ENCODE measurements at regions of chr2 and their contacts with region 1.

Region 1: GRCh38 chr2:131154071-131154531 is 49.0 kb downstream of the PLEKHB2 start:
- DNase-seq: peak; percentile 35 to 55 (median 47)
- H3K4me3 ChIP-seq: no peak overlapping the region
- H3K4me3 Mint-ChIP-seq: no peak overlapping the region
- H3K27ac ChIP-seq: no peak overlapping the region
- H3K27ac Mint-ChIP-seq: no peak overlapping the region
- H3K4me1 ChIP-seq: no peaks in the 10 kb centered on the region
- H3K4me1 Mint-ChIP-seq: peaks cover 6% of the 10 kb centered on the region
- H3K27me3 ChIP-seq: no peaks in the 10 kb centered on the region
- H3K27me3 Mint-ChIP-seq: peaks cover 1 to 7% (median 5%) of the 10 kb centered on the region in 3 donors
- CTCF ChIP-seq: peak; percentile 88

Region 2: GRCh38 chr2:131093006-131093695 is 61.0 kb before region 1 on chr2 and contains the start of gene FAM168B:
- intact Hi-C with region 1: no loop called
- DNase-seq: peak; percentile 81 to 90 (median 85)
- H3K4me3 ChIP-seq: peak within 1 kb of the TSS; percentile 56 to 97 (median 80)
- H3K4me3 Mint-ChIP-seq: peak within 1 kb of the TSS; percentile 90 to 96
- H3K27ac ChIP-seq: peak within 1 kb of the TSS; percentile 88 to 91
- H3K27ac Mint-ChIP-seq: peak within 1 kb of the TSS; percentile 86 to 97 (median 96)
- H3K4me1 ChIP-seq: peaks cover 12 to 19% of the 10 kb centered on the region in 2 donors
- H3K4me1 Mint-ChIP-seq: peaks cover 13% of the 10 kb centered on the region
- H3K27me3 ChIP-seq: no peaks in the 10 kb centered on the region
- H3K27me3 Mint-ChIP-seq: peaks cover 0 to 7% (median 2%) of the 10 kb centered on the region in 3 donors
- CTCF ChIP-seq: no peak
- polyA plus RNA-seq, gene FAM168B: 20.5 to 33.2 (median 22.6) TPM

Region 3: DNA sequence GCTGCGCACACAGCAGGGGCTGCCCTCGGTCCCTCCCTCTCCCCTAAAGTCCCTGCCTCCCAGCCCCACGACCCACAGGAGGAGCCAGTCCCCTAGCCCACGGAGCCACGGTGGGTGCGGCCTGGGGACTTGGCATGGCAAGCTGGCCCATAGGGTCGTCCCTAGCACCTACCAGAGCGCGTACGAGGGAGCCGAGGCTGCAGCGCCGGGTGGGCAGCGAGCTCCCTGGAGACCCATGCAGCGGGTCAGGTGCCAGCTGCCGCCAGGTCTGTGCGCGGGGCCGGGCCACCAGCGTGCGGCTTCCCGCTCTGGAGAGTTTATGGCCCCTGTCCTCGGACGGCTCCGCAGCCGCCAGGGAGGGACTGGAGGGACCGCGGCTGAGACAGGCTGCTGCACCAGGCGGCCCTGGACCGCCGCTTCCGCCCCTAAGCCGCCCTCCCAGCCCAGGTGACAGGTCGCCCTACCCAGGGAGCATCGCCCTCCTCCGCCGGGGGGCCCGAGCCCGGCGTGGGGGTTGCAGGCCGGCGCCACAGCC is 647.2 kb after region 1 on chr2:
- intact Hi-C with region 1: loop called in 1 of 2 experiments (anchors 10 kb)
- DNase-seq: peak in 1 of 3 donors; percentile 4
- H3K4me3 ChIP-seq: no peak overlapping the region
- H3K4me3 Mint-ChIP-seq: no peak overlapping the region
- H3K27ac ChIP-seq: no peak overlapping the region
- H3K27ac Mint-ChIP-seq: no peak overlapping the region
- H3K4me1 ChIP-seq: peaks cover 0 to 5% of the 10 kb centered on the region in 2 donors
- H3K4me1 Mint-ChIP-seq: peaks cover 2% of the 10 kb centered on the region
- H3K27me3 ChIP-seq: peaks cover 0 to 8% of the 10 kb centered on the region in 2 donors
- H3K27me3 Mint-ChIP-seq: peaks cover 11 to 21% (median 12%) of the 10 kb centered on the region in 3 donors
- CTCF ChIP-seq: no peak